Heart left ventricle (tissue), 16 donors: ENCODE measurements at regions of chr16 and their contacts with region 1.

Region 1: GRCh38 chr16:68040507-68041288 is 17.6 kb downstream of the DUS2 start:
- DNase-seq: peak; percentile 76 to 92 (median 84)
- ATAC-seq: peak; percentile 84 to 95 (median 94)
- H3K4me3 ChIP-seq: no peak overlapping the region
- H3K27ac ChIP-seq: peak overlapping the region in 1 of 12 donors; percentile 72
- H3K4me1 ChIP-seq: peaks cover 0 to 42% (median 0%) of the 10 kb centered on the region in 12 donors
- H3K27me3 ChIP-seq: no peaks in the 10 kb centered on the region
- CTCF ChIP-seq: peak; percentile 70 to 89 (median 82)
- POLR2A ChIP-seq: no peak

Region 2: DNA sequence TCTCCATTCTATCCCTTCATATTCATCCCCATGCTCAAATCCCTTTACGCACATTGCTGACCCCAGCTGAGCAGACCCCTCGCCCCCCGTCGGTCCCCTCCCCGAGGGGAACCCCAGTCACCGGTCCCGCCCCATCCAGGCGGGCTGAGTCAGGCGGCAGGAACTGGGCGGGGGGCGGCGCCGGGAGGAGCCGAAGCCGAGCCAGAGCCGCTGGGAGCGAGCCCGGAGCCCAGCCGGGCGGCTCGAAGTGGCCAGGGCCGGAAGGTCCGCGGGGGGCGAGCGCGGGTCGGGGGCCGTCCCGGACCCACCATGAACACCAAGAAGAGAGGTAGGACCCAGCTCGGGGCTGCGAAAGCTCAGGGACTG is 503.4 kb before region 1 on chr16:
- intact Hi-C with region 1: no loop called
- DNase-seq: peak; percentile 83 to 89 (median 84)
- ATAC-seq: peak; percentile 21 to 79 (median 68)
- H3K4me3 ChIP-seq: peak overlapping the region; percentile 62 to 97 (median 80)
- H3K27ac ChIP-seq: peak overlapping the region; percentile 83 to 100 (median 96)
- H3K4me1 ChIP-seq: peaks cover 5 to 97% (median 70%) of the 10 kb centered on the region in 12 donors
- H3K27me3 ChIP-seq: no peaks in the 10 kb centered on the region
- CTCF ChIP-seq: no peak
- POLR2A ChIP-seq: peak in 1 of 2 donors; percentile 47

Region 3: DNA sequence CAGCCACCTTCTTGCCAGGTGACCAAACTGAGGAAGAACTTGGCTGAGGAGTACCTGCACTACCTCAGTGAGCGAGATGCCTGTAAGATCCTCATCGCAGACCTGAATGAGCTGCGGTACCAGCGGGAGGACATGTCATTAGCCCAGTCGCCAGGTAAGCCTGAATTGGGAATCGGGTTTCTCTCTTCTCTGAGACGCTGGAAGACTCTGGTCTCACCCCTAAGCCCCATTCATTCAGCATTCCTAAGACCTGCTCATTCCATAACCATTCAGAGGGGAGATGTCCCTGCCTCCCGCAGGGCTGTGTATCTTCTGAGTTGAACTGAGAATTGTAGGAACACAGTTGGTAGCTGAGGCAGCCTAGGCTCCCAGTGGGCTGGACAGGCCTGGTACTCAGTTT is 215.6 kb before region 1 on chr16:
- intact Hi-C with region 1: loop called in 1 of 10 experiments (anchors 5 kb)
- DNase-seq: peak in 1 of 5 donors; percentile 11
- ATAC-seq: no peak
- H3K4me3 ChIP-seq: no peak overlapping the region
- H3K27ac ChIP-seq: no peak overlapping the region
- H3K4me1 ChIP-seq: no peaks in the 10 kb centered on the region
- H3K27me3 ChIP-seq: no peaks in the 10 kb centered on the region
- CTCF ChIP-seq: no peak
- POLR2A ChIP-seq: no peak

Region 4: GRCh38 chr16:67883872-67884261 is 156.8 kb before region 1 on chr16:
- intact Hi-C with region 1: loop called in 9 of 10 experiments (anchors 1 to 10 kb)
- DNase-seq: peak; percentile 47 to 80 (median 49)
- ATAC-seq: peak in 3 of 4 donors; percentile 11 to 41 (median 38)
- H3K4me3 ChIP-seq: no peak overlapping the region
- H3K27ac ChIP-seq: peak overlapping the region in 11 of 12 donors; percentile 44 to 94 (median 81)
- H3K4me1 ChIP-seq: peaks cover 0 to 56% (median 32%) of the 10 kb centered on the region in 12 donors
- H3K27me3 ChIP-seq: no peaks in the 10 kb centered on the region
- CTCF ChIP-seq: peak; percentile 74 to 92 (median 83)
- POLR2A ChIP-seq: no peak

Region 5: GRCh38 chr16:67935402-67936123 is 105.1 kb before region 1 on chr16:
- intact Hi-C with region 1: loop called in 4 of 10 experiments (anchors 5 to 10 kb)
- DNase-seq: peak; percentile 95 to 96 (median 95)
- ATAC-seq: peak; percentile 89 to 93 (median 92)
- H3K4me3 ChIP-seq: peak overlapping the region; percentile 57 to 98 (median 77)
- H3K27ac ChIP-seq: peak overlapping the region; percentile 82 to 99 (median 92)
- H3K4me1 ChIP-seq: peaks cover 0 to 42% (median 23%) of the 10 kb centered on the region in 12 donors
- H3K27me3 ChIP-seq: no peaks in the 10 kb centered on the region
- CTCF ChIP-seq: no peak
- POLR2A ChIP-seq: peak; percentile 13 to 68

Region 6: GRCh38 chr16:67942200-67942509 is 98.5 kb before region 1 on chr16:
- intact Hi-C with region 1: loop called in 4 of 10 experiments (anchors 5 to 10 kb)
- DNase-seq: no peak
- ATAC-seq: peak in 3 of 4 donors; percentile 14 to 22 (median 18)
- H3K4me3 ChIP-seq: no peak overlapping the region
- H3K27ac ChIP-seq: peak overlapping the region in 7 of 12 donors; percentile 4 to 54 (median 25)
- H3K4me1 ChIP-seq: peaks cover 4 to 67% (median 38%) of the 10 kb centered on the region in 12 donors
- H3K27me3 ChIP-seq: no peaks in the 10 kb centered on the region
- CTCF ChIP-seq: peak; percentile 35 to 70 (median 54)
- POLR2A ChIP-seq: no peak

Region 7: DNA sequence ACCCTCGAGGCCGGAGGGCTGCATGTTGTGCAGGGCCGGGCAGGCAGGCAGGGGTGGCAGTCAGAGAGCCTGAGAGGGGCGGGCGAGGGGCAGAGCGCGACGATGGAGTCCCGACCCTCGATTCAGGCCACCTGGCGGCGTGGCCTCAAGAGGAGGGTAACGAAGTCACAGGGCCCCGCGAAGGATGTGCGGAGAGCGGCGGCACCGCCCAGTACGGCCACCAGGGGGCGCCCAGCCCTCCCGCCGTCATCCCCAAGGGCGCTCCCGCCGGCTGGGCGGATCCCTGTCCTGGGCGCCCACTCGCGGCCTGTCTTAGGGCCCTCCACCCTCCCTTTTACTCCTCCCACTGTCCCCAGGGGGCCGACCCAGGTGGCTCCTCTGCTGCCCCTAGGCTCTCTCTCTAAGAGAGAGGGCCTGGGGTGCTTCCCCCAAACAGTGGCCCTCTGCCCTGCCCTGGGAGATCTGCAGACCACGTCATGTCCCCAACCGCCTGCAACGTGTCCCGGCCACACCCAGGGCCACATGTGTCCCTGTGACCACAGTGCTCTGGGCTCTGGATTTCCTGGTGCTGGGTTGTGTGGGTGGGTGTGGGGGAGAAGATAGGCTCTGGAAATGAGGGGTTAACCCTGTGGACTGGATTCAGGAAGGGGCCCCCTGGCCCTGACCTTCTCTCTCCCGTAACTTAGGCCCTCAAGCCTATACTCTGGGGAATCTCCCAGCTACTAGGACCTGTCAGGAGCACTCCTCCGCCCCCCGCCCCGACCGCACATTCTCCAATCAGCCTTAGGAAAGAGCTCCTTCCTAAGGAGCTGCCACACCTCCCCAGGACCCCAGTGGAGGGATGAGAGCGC is 47.3 kb before region 1 on chr16:
- intact Hi-C with region 1: loop called in 9 of 10 experiments (anchors 2 to 10 kb)
- DNase-seq: peak; percentile 83 to 92 (median 88)
- ATAC-seq: peak; percentile 90 to 95 (median 94)
- H3K4me3 ChIP-seq: peak overlapping the region in 10 of 12 donors; percentile 3 to 54 (median 47)
- H3K27ac ChIP-seq: peak overlapping the region; percentile 43 to 88 (median 81)
- H3K4me1 ChIP-seq: peaks cover 0 to 36% (median 9%) of the 10 kb centered on the region in 12 donors
- H3K27me3 ChIP-seq: no peaks in the 10 kb centered on the region
- CTCF ChIP-seq: peak; percentile 97 to 100 (median 100)
- POLR2A ChIP-seq: peak in 1 of 2 donors; percentile 29

Region 8: DNA sequence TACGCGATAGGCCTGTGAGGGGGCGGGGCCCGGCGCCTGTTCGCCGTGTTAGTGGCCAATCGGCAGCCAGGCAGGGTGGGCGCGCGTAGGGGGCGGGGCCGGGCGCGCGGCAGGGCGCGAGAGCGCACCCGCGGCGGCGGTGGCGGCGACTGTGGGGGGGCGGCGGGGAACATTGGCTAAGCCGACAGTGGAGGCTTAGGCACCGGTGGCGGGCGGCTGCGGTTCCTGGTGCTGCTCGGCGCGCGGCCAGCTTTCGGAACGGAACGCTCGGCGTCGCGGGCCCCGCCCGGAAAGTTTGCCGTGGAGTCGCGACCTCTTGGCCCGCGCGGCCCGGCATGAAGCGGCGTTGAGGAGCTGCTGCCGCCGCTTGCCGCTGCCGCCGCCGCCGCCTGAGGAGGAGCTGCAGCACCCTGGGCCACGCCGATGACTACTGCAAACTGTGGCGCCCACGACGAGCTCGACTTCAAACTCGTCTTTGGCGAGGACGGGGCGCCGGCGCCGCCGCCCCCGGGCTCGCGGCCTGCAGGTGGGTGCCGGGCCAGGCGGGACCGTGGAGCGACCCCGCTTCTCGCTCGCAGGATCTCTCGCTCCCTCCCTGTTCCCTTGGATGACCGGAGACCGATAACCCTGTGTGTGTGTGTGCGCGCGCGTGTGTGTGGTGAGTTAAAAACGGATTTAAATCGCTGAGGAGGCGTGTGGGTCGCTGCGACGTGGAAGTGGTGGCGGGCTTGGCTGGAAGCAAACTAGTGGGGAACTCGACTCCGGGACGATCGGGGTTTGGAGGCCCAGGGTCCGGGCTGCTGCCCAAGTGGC is 44.8 kb after region 1 on chr16 and contains the start of gene NFATC3:
- intact Hi-C with region 1: no loop called
- DNase-seq: peak; percentile 99
- ATAC-seq: peak; percentile 87 to 93 (median 90)
- H3K4me3 ChIP-seq: peak within 1 kb of the TSS; percentile 70 to 95 (median 88)
- H3K27ac ChIP-seq: peak within 1 kb of the TSS; percentile 96 to 99 (median 98)
- H3K4me1 ChIP-seq: peaks cover 0 to 78% (median 55%) of the 10 kb centered on the region in 12 donors
- H3K27me3 ChIP-seq: no peaks in the 10 kb centered on the region
- CTCF ChIP-seq: peak in 2 of 12 donors; percentile 16 to 29
- POLR2A ChIP-seq: peak in 1 of 2 donors; percentile 83
- total RNA-seq, gene NFATC3: 20.6 to 35.1 (median 28.8) TPM

Region 9: GRCh38 chr16:68406451-68407152 is 365.9 kb after region 1 on chr16:
- intact Hi-C with region 1: no loop called
- DNase-seq: no peak
- ATAC-seq: no peak
- H3K4me3 ChIP-seq: no peak overlapping the region
- H3K27ac ChIP-seq: no peak overlapping the region
- H3K4me1 ChIP-seq: no peaks in the 10 kb centered on the region
- H3K27me3 ChIP-seq: peaks cover 0 to 24% (median 0%) of the 10 kb centered on the region in 9 donors
- CTCF ChIP-seq: no peak
- POLR2A ChIP-seq: no peak